Aorta (tissue), 5 donors: ENCODE measurements at regions of chr16 and their contacts with region 1.

Region 1: GRCh38 chr16:30378236-30379204 is 3.8 kb downstream of the SEPTIN1 start:
- DNase-seq: peak; percentile 99 to 100
- ATAC-seq: peak; percentile 99
- H3K4me3 ChIP-seq: peak overlapping the region; percentile 35 to 82
- H3K27ac ChIP-seq: peak overlapping the region; percentile 10 to 39
- H3K4me1 ChIP-seq: no peaks in the 10 kb centered on the region
- H3K27me3 ChIP-seq: no peaks in the 10 kb centered on the region

Region 2: GRCh38 chr16:29805378-29806098 is 573.0 kb before region 1 on chr16:
- intact Hi-C with region 1: loop called in 1 of 2 experiments (anchors 5 kb)
- DNase-seq: peak; percentile 99
- ATAC-seq: peak; percentile 95
- H3K4me3 ChIP-seq: peak overlapping the region; percentile 20 to 38
- H3K27ac ChIP-seq: peak overlapping the region; percentile 23 to 80
- H3K4me1 ChIP-seq: no peaks in the 10 kb centered on the region
- H3K27me3 ChIP-seq: no peaks in the 10 kb centered on the region